CD8-positive, alpha-beta memory T cell (primary cell): ENCODE measurements at regions of chr5 and their contacts with region 1.

Region 1: GRCh38 chr5:32329308-32329834 is 16.6 kb upstream of the MTMR12 start:
- DNase-seq: peak; percentile 32 to 64 (median 37)
- H3K4me3 ChIP-seq: no peak overlapping the region
- H3K4me3 Mint-ChIP-seq: no peak overlapping the region
- H3K27ac ChIP-seq: no peak overlapping the region
- H3K27ac Mint-ChIP-seq: peak overlapping the region in 1 of 8 donors; percentile 47
- H3K4me1 ChIP-seq: no peaks in the 10 kb centered on the region
- H3K4me1 Mint-ChIP-seq: peaks cover 0 to 2% (median 2%) of the 10 kb centered on the region in 3 donors
- H3K27me3 ChIP-seq: no peaks in the 10 kb centered on the region
- H3K27me3 Mint-ChIP-seq: no peaks in the 10 kb centered on the region

Region 2: DNA sequence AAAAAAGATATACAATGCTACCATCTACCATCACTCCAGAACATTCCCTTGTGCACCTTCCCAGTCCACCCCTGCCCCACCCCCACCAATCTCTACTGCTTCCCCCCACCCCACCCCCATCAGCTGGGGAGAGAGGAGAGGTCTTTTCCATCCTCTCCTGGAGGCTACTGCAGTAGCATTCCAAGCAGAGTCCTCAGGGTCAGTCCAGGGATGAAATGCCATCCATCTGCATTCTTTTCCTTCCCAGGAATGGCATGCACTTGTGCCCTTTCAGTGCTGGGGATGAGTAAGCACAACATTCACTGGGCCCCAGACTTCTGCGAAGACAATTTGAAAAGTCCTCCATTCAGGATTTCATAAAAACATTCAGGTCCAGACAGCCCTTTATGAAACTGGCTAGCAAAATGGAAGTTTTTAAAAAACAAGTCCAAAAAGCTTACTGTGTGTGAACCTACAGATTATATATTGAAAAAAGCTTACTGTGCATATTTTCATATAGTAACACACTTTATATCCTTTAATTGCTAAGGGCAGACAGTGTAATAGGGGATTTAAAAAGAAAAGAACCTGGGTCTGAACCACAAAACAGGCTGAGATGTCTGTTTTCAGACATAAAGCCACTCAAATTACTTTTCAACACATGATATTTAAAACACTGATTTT is 105.3 kb before region 1 on chr5:
- CTCF ChIA-PET with region 1: interaction called, 144 read pairs
- POLR2A ChIA-PET with region 1: no interaction called
- DNase-seq: no peak
- H3K4me3 ChIP-seq: no peak overlapping the region
- H3K4me3 Mint-ChIP-seq: no peak overlapping the region
- H3K27ac ChIP-seq: no peak overlapping the region
- H3K27ac Mint-ChIP-seq: no peak overlapping the region
- H3K4me1 ChIP-seq: no peaks in the 10 kb centered on the region
- H3K4me1 Mint-ChIP-seq: no peaks in the 10 kb centered on the region
- H3K27me3 ChIP-seq: no peaks in the 10 kb centered on the region
- H3K27me3 Mint-ChIP-seq: no peaks in the 10 kb centered on the region

Region 3: DNA sequence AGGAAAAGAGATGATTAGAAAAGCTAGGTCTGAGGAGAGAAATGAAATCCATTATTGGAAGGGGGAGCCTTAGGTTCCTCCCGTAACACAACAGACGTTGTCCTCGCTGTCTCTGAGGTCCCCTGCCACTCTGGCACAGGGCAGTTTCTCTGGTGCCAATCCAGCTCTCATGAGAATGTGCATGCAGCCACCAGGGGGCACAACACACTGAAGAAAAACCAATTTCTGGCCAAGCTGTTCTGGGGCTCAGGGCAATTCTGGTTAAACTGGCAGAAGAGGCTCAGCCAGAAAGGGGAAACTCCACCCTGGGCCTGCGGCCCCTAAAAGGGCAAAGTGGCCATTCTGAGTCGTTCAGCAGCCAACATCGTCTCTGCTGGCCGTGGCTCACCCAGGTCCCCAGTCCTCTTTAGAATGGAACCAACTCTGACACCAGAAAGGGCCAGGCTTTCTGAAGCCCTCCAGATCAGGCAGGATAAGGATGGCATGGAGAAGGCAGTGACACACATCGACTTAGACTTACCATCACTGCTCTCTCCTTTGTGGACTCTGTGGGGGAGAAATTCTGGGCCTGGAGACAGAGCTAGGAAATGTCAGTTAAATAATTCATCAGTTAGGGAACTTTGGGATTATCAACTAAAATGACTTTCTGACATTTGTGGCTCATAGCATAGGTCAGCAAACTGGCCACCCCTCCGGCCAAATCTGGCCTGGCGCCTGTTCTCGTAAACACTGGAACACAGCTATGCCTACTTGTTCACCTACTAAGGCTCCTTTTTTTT is 96.7 kb before region 1 on chr5:
- CTCF ChIA-PET with region 1: interaction called, 144 read pairs
- POLR2A ChIA-PET with region 1: no interaction called
- DNase-seq: peak; percentile 56 to 82 (median 60)
- H3K4me3 ChIP-seq: no peak overlapping the region
- H3K4me3 Mint-ChIP-seq: peak overlapping the region in 1 of 7 donors; percentile 56
- H3K27ac ChIP-seq: no peak overlapping the region
- H3K27ac Mint-ChIP-seq: peak overlapping the region; percentile 6 to 94 (median 64)
- H3K4me1 ChIP-seq: no peaks in the 10 kb centered on the region
- H3K4me1 Mint-ChIP-seq: peaks cover 5 to 8% (median 6%) of the 10 kb centered on the region in 3 donors
- H3K27me3 ChIP-seq: no peaks in the 10 kb centered on the region
- H3K27me3 Mint-ChIP-seq: no peaks in the 10 kb centered on the region

Region 4: DNA sequence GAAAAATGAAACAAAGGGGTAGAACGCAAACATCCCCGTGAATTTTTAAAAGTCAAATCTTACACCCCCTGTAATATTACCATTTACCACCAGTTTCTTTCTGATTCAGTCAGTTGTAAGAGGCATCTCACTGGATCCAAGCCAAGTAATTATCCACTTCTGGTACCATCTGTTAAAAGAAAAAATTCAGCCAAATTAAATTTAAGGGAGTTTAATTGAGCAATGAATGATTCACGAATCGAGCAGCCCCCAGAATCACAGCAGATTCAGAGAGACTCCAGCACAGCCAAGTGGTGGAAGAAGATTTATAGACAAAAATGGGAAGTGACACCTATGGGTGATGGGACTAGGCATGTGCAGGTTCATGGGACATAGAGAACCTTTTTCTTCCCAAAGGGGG is 13.3 kb after region 1 on chr5:
- CTCF ChIA-PET with region 1: interaction called, 12 read pairs
- POLR2A ChIA-PET with region 1: no interaction called
- DNase-seq: no peak
- H3K4me3 ChIP-seq: no peak overlapping the region
- H3K4me3 Mint-ChIP-seq: no peak overlapping the region
- H3K27ac ChIP-seq: no peak overlapping the region
- H3K27ac Mint-ChIP-seq: no peak overlapping the region
- H3K4me1 ChIP-seq: no peaks in the 10 kb centered on the region
- H3K4me1 Mint-ChIP-seq: no peaks in the 10 kb centered on the region
- H3K27me3 ChIP-seq: no peaks in the 10 kb centered on the region
- H3K27me3 Mint-ChIP-seq: peaks cover 2 to 11% of the 10 kb centered on the region in 2 donors

Region 5: GRCh38 chr5:32353420-32353819 is 24.0 kb after region 1 on chr5:
- CTCF ChIA-PET with region 1: no interaction called
- POLR2A ChIA-PET with region 1: no interaction called
- DNase-seq: no peak
- H3K4me3 ChIP-seq: no peak overlapping the region
- H3K4me3 Mint-ChIP-seq: no peak overlapping the region
- H3K27ac ChIP-seq: no peak overlapping the region
- H3K27ac Mint-ChIP-seq: no peak overlapping the region
- H3K4me1 ChIP-seq: no peaks in the 10 kb centered on the region
- H3K4me1 Mint-ChIP-seq: no peaks in the 10 kb centered on the region
- H3K27me3 ChIP-seq: no peaks in the 10 kb centered on the region
- H3K27me3 Mint-ChIP-seq: no peaks in the 10 kb centered on the region

Region 6: GRCh38 chr5:32365623-32366022 is 36.3 kb after region 1 on chr5:
- CTCF ChIA-PET with region 1: interaction called, 10 read pairs
- POLR2A ChIA-PET with region 1: no interaction called
- DNase-seq: no peak
- H3K4me3 ChIP-seq: no peak overlapping the region
- H3K4me3 Mint-ChIP-seq: no peak overlapping the region
- H3K27ac ChIP-seq: no peak overlapping the region
- H3K27ac Mint-ChIP-seq: no peak overlapping the region
- H3K4me1 ChIP-seq: no peaks in the 10 kb centered on the region
- H3K4me1 Mint-ChIP-seq: peaks cover 0 to 4% (median 0%) of the 10 kb centered on the region in 3 donors
- H3K27me3 ChIP-seq: no peaks in the 10 kb centered on the region
- H3K27me3 Mint-ChIP-seq: no peaks in the 10 kb centered on the region